CD14-positive monocyte (primary cell): ENCODE measurements at regions of chr7 and their contacts with region 1.

Region 1: DNA sequence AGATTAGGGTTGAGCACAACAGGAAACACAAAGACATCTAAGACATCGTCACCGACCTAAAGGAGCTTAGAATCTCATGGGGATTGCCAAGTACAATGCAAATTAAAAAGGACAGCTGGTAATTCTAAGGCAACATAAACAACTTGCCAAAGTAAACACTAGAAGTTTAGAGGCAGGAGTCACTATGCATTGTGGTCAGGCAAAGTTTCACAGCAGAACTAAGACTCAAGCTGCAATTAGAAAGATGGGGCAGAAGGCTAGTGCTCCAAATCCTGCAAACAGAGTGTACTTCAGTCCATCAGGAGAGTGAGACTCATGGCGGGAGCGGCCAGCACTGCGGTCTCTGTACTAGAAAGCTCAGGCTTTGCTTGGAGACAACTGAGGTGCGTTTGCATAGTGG is 52.7 kb downstream of the HIPK2 start:
- DNase-seq: no peak
- H3K4me3 ChIP-seq: peak overlapping the region in 1 of 3 experiments; percentile 54
- H3K4me3 Mint-ChIP-seq: no peak overlapping the region
- H3K27ac ChIP-seq: peak overlapping the region; percentile 86 to 93
- H3K27ac Mint-ChIP-seq: peak overlapping the region; percentile 96 to 100 (median 99)
- H3K4me1 ChIP-seq: peaks cover 96 to 99% of the 10 kb centered on the region in 2 donors
- H3K4me1 Mint-ChIP-seq: peaks cover 66% of the 10 kb centered on the region
- H3K27me3 ChIP-seq: no peaks in the 10 kb centered on the region
- H3K27me3 Mint-ChIP-seq: peaks cover 0 to 4% (median 0%) of the 10 kb centered on the region in 3 donors
- CTCF ChIP-seq: no peak

Region 2: DNA sequence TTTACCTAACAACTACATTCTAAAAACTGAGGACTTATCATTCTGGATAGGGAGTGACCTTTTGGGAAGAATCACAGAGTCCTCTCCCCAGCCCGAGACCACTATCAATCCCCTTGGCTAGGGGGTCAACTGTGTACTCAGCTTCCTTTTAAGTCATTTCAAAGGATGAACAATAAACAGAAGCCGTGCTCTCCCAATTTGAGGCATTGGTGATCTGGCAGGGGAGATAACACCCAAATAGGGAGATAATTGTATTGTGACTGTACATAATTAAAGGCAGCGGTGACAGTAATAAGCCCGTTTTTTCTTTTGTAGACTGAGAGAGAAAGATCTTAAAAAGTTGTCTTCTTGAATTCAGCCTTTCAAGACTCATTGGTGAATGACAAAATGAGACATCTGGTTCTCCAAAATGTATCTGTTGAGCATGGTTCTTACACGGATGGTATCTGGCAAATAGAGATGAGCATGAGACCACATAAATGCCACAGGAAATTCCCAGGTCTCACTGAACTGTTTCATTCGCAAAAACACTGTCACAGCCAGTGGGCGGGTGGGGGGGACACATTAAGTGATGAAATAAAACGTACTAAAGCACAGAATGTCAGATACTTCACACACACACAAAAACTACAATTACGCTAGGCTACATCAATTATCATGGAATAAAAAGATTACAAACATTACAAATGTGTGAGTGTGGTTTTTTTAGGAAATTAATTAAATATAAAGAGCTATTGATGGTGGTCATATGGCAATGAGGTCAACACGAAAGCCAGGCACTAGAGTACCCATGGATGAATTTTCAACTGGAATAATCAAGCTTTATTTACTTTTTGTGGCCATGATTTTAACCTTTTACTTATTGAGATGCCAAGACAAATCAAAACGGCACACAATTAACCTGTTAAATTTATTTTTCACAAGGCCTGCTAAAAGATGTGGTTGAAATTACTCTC is 55.7 kb before region 1 on chr7:
- intact Hi-C with region 1: no loop called
- DNase-seq: no peak
- H3K4me3 ChIP-seq: no peak overlapping the region
- H3K4me3 Mint-ChIP-seq: no peak overlapping the region
- H3K27ac ChIP-seq: no peak overlapping the region
- H3K27ac Mint-ChIP-seq: peak overlapping the region in 2 of 7 donors; percentile 34 to 62
- H3K4me1 ChIP-seq: peaks cover 3 to 6% of the 10 kb centered on the region in 2 donors
- H3K4me1 Mint-ChIP-seq: peaks cover 7% of the 10 kb centered on the region
- H3K27me3 ChIP-seq: no peaks in the 10 kb centered on the region
- H3K27me3 Mint-ChIP-seq: peaks cover 0 to 2% (median 0%) of the 10 kb centered on the region in 3 donors
- CTCF ChIP-seq: no peak

Region 3: DNA sequence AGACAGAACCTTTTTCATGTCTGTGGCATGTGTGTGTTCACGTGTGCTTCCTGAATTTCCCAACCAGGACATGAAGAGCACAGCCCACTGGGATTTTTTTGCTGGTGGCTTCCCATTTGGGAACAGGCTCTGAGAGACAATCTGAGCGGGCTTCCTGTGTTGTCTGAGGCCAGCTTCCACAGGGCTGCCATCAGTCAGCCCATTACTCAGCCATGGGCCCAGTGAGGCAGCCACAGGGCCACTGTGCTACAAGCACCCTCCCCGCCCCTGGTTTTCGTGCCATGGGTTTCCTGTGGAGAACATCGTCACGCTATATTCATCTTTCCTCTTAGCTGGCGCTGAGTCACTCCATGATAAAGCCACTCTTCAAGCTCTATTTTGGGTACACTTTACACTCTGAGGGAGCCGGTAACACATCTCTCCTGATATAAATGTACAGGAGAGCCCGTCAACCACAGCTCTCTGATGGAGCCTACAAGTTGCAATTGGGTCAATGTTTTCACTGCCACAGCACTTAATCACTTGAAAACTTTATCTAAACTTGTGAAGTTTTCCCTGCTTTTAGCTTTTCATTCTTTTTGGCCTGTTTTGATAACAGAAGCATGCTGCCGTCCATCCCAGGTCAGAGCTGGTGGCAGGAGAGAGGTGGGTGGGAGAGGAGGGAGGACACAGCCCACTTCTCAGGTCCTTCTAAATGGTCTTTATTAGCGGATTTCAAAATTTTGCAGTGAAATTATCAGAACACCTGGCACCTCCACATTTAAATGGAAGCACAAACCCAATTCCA is 44.2 kb before region 1 on chr7:
- intact Hi-C with region 1: loop called in 1 of 2 experiments (anchors 2 kb)
- DNase-seq: peak; percentile 94 to 99 (median 99)
- H3K4me3 ChIP-seq: no peak overlapping the region
- H3K4me3 Mint-ChIP-seq: peak overlapping the region in 1 of 2 donors; percentile 46
- H3K27ac ChIP-seq: peak overlapping the region; percentile 56 to 91
- H3K27ac Mint-ChIP-seq: peak overlapping the region; percentile 85 to 96 (median 94)
- H3K4me1 ChIP-seq: peaks cover 40 to 45% of the 10 kb centered on the region in 2 donors
- H3K4me1 Mint-ChIP-seq: peaks cover 50% of the 10 kb centered on the region
- H3K27me3 ChIP-seq: no peaks in the 10 kb centered on the region
- H3K27me3 Mint-ChIP-seq: peaks cover 0 to 5% (median 0%) of the 10 kb centered on the region in 3 donors
- CTCF ChIP-seq: no peak

Region 4: GRCh38 chr7:139771001-139771970 is 46.2 kb after region 1 on chr7:
- intact Hi-C with region 1: loop called (anchors 2 to 5 kb)
- DNase-seq: peak; percentile 89 to 95 (median 95)
- H3K4me3 ChIP-seq: peak overlapping the region in 1 of 3 experiments; percentile 35
- H3K4me3 Mint-ChIP-seq: peak overlapping the region; percentile 25 to 74
- H3K27ac ChIP-seq: peak overlapping the region; percentile 27 to 80
- H3K27ac Mint-ChIP-seq: peak overlapping the region; percentile 82 to 96 (median 94)
- H3K4me1 ChIP-seq: peaks cover 77 to 94% of the 10 kb centered on the region in 2 donors
- H3K4me1 Mint-ChIP-seq: peaks cover 86% of the 10 kb centered on the region
- H3K27me3 ChIP-seq: no peaks in the 10 kb centered on the region
- H3K27me3 Mint-ChIP-seq: peaks cover 0 to under 1% (median 0%) of the 10 kb centered on the region in 3 donors
- CTCF ChIP-seq: no peak